Tibial artery (tissue), 4 donors: ENCODE measurements at regions of chr11 and their contacts with region 1.

Region 1: GRCh38 chr11:66835768-66836405 is 7.4 kb upstream of the RCE1 start:
- DNase-seq: no peak
- H3K4me3 ChIP-seq: no peak overlapping the region
- H3K27ac ChIP-seq: no peak overlapping the region
- H3K4me1 ChIP-seq: peaks cover 0 to 9% (median 3%) of the 10 kb centered on the region in 4 donors
- H3K27me3 ChIP-seq: no peaks in the 10 kb centered on the region
- CTCF ChIP-seq: no peak

Region 2: DNA sequence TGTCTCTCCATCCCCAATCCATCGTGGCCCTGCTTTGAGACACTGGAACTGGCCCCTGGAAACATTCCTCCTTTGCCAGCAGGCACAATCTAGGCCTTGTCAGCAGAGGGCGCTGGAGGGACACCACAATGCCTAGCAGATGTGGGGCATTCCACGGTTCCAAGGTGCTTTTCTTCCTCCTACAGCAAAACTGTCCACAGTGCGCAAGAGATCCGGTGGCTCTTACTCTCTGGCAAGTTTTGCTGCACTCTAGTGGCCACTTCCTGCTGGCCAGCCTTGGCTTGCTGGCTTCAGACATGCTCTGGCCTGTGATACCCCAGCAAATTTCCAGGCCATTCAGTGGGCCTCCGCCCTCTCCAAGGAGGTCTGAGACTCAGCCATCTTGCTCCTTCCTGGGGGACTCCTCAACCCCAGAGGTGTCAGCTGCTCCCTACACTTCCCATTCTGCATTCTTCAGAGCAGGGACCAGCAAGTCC is 141.1 kb before region 1 on chr11:
- intact Hi-C with region 1: loop called (anchors 2 kb)
- DNase-seq: peak; percentile 91 to 93
- H3K4me3 ChIP-seq: no peak overlapping the region
- H3K27ac ChIP-seq: no peak overlapping the region
- H3K4me1 ChIP-seq: no peaks in the 10 kb centered on the region
- H3K27me3 ChIP-seq: no peaks in the 10 kb centered on the region
- CTCF ChIP-seq: peak; percentile 92 to 93